ENCODE measurements at regions of chr7 and their contacts with region 1.

Region 1: GRCh38 chr7:81499262-81500116 is 270.4 kb downstream of the HGF start:
- DNase-seq: no peak
- ATAC-seq: peak; percentile 61 to 90 (median 72)
- H3K4me3 ChIP-seq: no peak overlapping the region
- H3K27ac ChIP-seq: no peak overlapping the region
- H3K4me1 ChIP-seq: peaks cover 11% of the 10 kb centered on the region
- H3K27me3 ChIP-seq: no peaks in the 10 kb centered on the region
- CTCF ChIP-seq: peak; percentile 57

Region 2: DNA sequence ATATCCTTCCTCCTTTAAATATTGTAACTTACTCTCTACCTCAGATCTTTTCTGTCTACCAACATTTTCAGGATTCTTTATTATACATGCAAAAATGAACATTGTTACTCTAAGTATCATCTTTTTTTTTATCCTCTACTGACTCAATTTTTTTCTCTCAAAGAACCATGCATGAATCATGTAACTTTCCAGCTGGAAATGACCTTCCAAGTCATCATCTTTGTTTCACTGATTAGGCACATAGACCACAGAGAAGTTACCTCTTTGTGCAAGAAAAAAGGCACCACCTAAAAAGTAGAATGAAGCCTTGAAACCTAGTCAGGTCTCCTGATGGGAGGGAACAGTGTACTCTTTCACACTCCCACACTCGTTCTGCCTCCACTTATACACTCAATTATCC is 35.5 kb after region 1 on chr7:
- intact Hi-C with region 1: no loop called
- DNase-seq: no peak
- ATAC-seq: no peak
- H3K4me3 ChIP-seq: no peak overlapping the region
- H3K27ac ChIP-seq: no peak overlapping the region
- H3K4me1 ChIP-seq: no peaks in the 10 kb centered on the region
- H3K27me3 ChIP-seq: no peaks in the 10 kb centered on the region
- CTCF ChIP-seq: no peak

Region 3: DNA sequence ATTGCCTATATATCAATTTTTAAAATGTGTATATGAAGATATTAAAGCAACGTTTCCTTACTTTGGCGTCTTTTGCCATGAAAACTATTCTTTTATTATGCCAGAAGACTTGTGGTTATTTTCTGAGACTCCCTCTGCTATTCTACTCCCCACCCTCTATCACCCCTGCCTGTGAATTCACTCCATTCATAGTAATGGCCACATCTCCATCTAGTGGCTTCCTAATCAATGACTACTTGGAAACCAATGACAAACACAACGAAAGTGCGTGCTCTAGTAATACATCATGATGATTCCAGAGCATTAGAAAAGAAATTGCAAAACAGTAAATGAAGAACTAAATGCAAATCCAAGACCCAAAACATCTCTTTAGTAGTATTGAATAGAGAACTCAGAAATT is 457.0 kb after region 1 on chr7:
- intact Hi-C with region 1: loop called in 1 of 2 experiments (anchors 10 kb)
- DNase-seq: no peak
- ATAC-seq: peak in 1 of 4 donors; percentile 51
- H3K4me3 ChIP-seq: no peak overlapping the region
- H3K27ac ChIP-seq: no peak overlapping the region
- H3K4me1 ChIP-seq: peaks cover 9% of the 10 kb centered on the region
- H3K27me3 ChIP-seq: no peaks in the 10 kb centered on the region
- CTCF ChIP-seq: peak; percentile 27

Region 4: GRCh38 chr7:82017334-82017943 is 518.0 kb after region 1 on chr7:
- intact Hi-C with region 1: loop called in 1 of 2 experiments (anchors 10 kb)
- DNase-seq: no peak
- ATAC-seq: no peak
- H3K4me3 ChIP-seq: no peak overlapping the region
- H3K27ac ChIP-seq: no peak overlapping the region
- H3K4me1 ChIP-seq: peaks cover 10% of the 10 kb centered on the region
- H3K27me3 ChIP-seq: no peaks in the 10 kb centered on the region
- CTCF ChIP-seq: peak; percentile 41

Measured in psoas muscle (tissue), 8 donors.